ENCODE measurements at regions of chr11 and their contacts with region 1.

Region 1: GRCh38 chr11:24437123-24437522 is 59.7 kb upstream of the LUZP2 start:
- DNase-seq: no peak
- H3K4me3 ChIP-seq: no peak overlapping the region
- CTCF ChIP-seq: no peak
- POLR2A ChIP-seq: no peak

Region 2: GRCh38 chr11:24470431-24470830 is 33.3 kb after region 1 on chr11:
- intact Hi-C with region 1: no loop called
- DNase-seq: no peak
- H3K4me3 ChIP-seq: no peak overlapping the region
- CTCF ChIP-seq: no peak
- POLR2A ChIP-seq: no peak

Region 3: GRCh38 chr11:24489477-24489876 is 52.4 kb after region 1 on chr11:
- intact Hi-C with region 1: no loop called
- DNase-seq: no peak
- H3K4me3 ChIP-seq: no peak overlapping the region
- CTCF ChIP-seq: no peak
- POLR2A ChIP-seq: no peak

Region 4: GRCh38 chr11:25377466-25377865 is 940.3 kb after region 1 on chr11:
- intact Hi-C with region 1: loop called (anchors 5 kb)
- DNase-seq: no peak
- H3K4me3 ChIP-seq: no peak overlapping the region
- CTCF ChIP-seq: no peak
- POLR2A ChIP-seq: no peak

Measured in lower leg skin (tissue), 4 donors.